ENCODE measurements at regions of chr2 and their contacts with region 1.

Region 1: GRCh38 chr2:203940039-203940438 is 3.5 kb downstream of the ICOS start:
- DNase-seq: no peak
- ATAC-seq: peak; percentile 3
- H3K4me3 Mint-ChIP-seq: peak overlapping the region; percentile 96
- H3K27ac Mint-ChIP-seq: peak overlapping the region; percentile 95
- H3K4me1 Mint-ChIP-seq: peaks cover 55% of the 10 kb centered on the region
- H3K27me3 Mint-ChIP-seq: no peaks in the 10 kb centered on the region
- CTCF ChIP-seq: no peak

Region 2: GRCh38 chr2:203650860-203651613 is 289.0 kb before region 1 on chr2:
- CTCF ChIA-PET with region 1: no interaction called
- POLR2A ChIA-PET with region 1: no interaction called
- intact Hi-C with region 1: no loop called
- DNase-seq: no peak
- ATAC-seq: peak; percentile 84
- H3K4me3 Mint-ChIP-seq: no peak overlapping the region
- H3K27ac Mint-ChIP-seq: no peak overlapping the region
- H3K4me1 Mint-ChIP-seq: peaks cover 18% of the 10 kb centered on the region
- H3K27me3 Mint-ChIP-seq: no peaks in the 10 kb centered on the region
- CTCF ChIP-seq: peak; percentile 39

Region 3: DNA sequence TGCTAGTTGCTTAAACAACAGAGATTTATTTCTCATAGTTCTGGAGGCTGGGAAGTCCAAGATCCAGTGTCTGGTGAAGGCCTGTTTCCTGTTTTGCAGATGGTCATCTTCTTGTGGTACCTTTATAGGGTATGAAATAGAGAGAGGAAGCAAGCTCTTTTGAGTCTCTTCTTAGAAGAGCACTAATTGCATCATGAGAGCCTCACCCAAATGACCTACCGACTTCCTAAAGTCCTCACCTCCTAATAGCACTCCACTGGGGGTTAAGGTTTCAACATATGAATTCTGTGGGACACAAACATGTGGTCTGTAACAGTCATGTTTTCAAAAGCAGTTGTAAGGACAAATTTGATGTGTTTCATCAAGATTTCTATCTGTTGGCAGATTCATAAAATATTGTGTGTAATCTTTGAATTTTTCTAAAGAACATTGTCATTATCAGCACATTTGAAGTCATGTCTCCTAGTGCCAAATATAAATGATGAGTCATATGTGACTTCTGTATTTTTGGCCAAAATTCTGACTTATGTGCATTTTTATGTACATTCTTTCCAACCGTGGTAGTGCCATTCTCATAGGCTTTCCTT is 188.3 kb before region 1 on chr2:
- CTCF ChIA-PET with region 1: no interaction called
- POLR2A ChIA-PET with region 1: no interaction called
- intact Hi-C with region 1: no loop called
- DNase-seq: no peak
- ATAC-seq: no peak
- H3K4me3 Mint-ChIP-seq: no peak overlapping the region
- H3K27ac Mint-ChIP-seq: peak overlapping the region; percentile 66
- H3K4me1 Mint-ChIP-seq: peaks cover 49% of the 10 kb centered on the region
- H3K27me3 Mint-ChIP-seq: no peaks in the 10 kb centered on the region
- CTCF ChIP-seq: no peak

Region 4: GRCh38 chr2:203840655-203841205 is 99.3 kb before region 1 on chr2:
- CTCF ChIA-PET with region 1: no interaction called
- POLR2A ChIA-PET with region 1: no interaction called
- intact Hi-C with region 1: no loop called
- DNase-seq: peak; percentile 16
- ATAC-seq: no peak
- H3K4me3 Mint-ChIP-seq: no peak overlapping the region
- H3K27ac Mint-ChIP-seq: no peak overlapping the region
- H3K4me1 Mint-ChIP-seq: peaks cover 21% of the 10 kb centered on the region
- H3K27me3 Mint-ChIP-seq: no peaks in the 10 kb centered on the region
- CTCF ChIP-seq: no peak

Region 5: DNA sequence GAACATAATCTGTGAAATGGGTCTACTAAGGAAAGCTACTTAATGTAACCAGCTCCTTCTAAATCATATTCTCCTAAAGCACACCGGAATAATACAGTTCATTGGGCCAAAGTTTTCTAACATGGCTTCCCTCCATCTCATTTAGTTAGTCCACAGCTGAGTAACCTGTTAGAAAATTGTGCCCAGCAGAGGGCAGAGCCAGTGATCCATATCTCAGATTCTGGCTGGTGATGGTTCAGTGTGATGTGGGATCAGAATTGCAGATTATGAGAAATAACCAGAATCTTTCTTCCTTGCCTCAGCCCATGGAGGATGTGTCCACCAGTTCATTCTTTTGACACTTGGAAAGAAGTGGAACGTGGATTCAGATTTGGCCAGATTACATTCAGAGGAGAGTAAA is 81.9 kb before region 1 on chr2:
- CTCF ChIA-PET with region 1: no interaction called
- POLR2A ChIA-PET with region 1: interaction called, 10 read pairs
- intact Hi-C with region 1: no loop called
- DNase-seq: peak; percentile 55
- ATAC-seq: no peak
- H3K4me3 Mint-ChIP-seq: no peak overlapping the region
- H3K27ac Mint-ChIP-seq: no peak overlapping the region
- H3K4me1 Mint-ChIP-seq: peaks cover 67% of the 10 kb centered on the region
- H3K27me3 Mint-ChIP-seq: no peaks in the 10 kb centered on the region
- CTCF ChIP-seq: no peak

Measured in activated CD8-positive, alpha-beta T cell treated with anti-CD3 and anti-CD28 coated beads for 36 hours (primary cell).